ENCODE measurements at regions of chr16 and their contacts with region 1.

Region 1: GRCh38 chr16:660459-661183 is 7.3 kb upstream of the RHOT2 start:
- DNase-seq: peak; percentile 66 to 87
- ATAC-seq: peak; percentile 82 to 91
- H3K4me3 ChIP-seq: peak overlapping the region; percentile 11 to 48 (median 36)
- H3K27ac ChIP-seq: peak overlapping the region; percentile 62 to 77 (median 74)
- H3K4me1 ChIP-seq: peaks cover 0 to 10% of the 10 kb centered on the region in 2 donors
- H3K27me3 ChIP-seq: no peaks in the 10 kb centered on the region
- CTCF ChIP-seq: peak; percentile 21 to 78 (median 74)
- POLR2A ChIP-seq: peak in 1 of 2 donors; percentile 1

Region 2: DNA sequence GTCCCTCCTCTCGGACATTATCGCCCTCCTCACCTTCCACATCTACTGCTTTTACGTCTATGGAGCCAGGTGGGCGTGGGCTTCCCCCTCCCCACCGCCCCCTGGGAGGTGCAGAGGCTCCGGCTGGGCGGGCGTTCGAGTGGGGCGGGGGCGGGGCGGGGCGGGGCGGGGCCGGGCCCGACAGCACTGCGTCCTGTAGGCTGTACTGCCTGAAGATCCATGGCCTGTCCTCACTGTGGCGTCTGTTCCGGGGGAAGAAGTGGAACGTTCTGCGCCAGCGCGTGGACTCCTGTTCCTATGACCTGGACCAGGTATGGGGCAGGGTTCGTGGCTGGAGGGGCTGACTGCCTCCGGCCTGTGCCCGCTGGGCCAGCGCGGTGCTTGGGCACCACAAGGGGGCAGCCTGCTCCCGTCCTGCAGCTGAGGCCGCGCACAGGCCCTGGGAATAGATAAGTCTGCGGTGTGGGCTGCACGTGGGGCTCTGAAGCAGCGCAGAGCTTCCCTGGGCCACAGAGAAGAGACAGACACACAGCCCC is 81.7 kb before region 1 on chr16:
- in situ Hi-C with region 1: no loop called
- intact Hi-C with region 1: loop called (anchors 1 kb)
- DNase-seq: peak; percentile 38 to 72
- ATAC-seq: peak; percentile 84 to 86
- H3K4me3 ChIP-seq: no peak overlapping the region
- H3K27ac ChIP-seq: no peak overlapping the region
- H3K4me1 ChIP-seq: no peaks in the 10 kb centered on the region
- H3K27me3 ChIP-seq: no peaks in the 10 kb centered on the region
- CTCF ChIP-seq: peak; percentile 82 to 91 (median 86)
- POLR2A ChIP-seq: no peak

Region 3: GRCh38 chr16:589658-590159 is 70.9 kb before region 1 on chr16 and contains the start of gene RAB40C:
- in situ Hi-C with region 1: no loop called
- intact Hi-C with region 1: loop called (anchors 1 kb)
- DNase-seq: peak; percentile 99
- ATAC-seq: peak; percentile 60 to 72
- H3K4me3 ChIP-seq: peak within 1 kb of the TSS; percentile 89 to 94 (median 90)
- H3K27ac ChIP-seq: peak within 1 kb of the TSS; percentile 96 to 99 (median 98)
- H3K4me1 ChIP-seq: peaks cover 61 to 66% of the 10 kb centered on the region in 2 donors
- H3K27me3 ChIP-seq: no peaks in the 10 kb centered on the region
- CTCF ChIP-seq: no peak
- POLR2A ChIP-seq: no peak
- total RNA-seq, gene RAB40C: 15.6 to 29.3 (median 21.4) TPM

Region 4: GRCh38 chr16:636206-637080 is 24.2 kb before region 1 on chr16 and contains the start of gene METTL26:
- in situ Hi-C with region 1: no loop called
- intact Hi-C with region 1: loop called (anchors 1 kb)
- DNase-seq: peak; percentile 94 to 97
- ATAC-seq: peak; percentile 86 to 89
- H3K4me3 ChIP-seq: peak within 1 kb of the TSS; percentile 81 to 98 (median 96)
- H3K27ac ChIP-seq: peak within 1 kb of the TSS; percentile 94 to 100 (median 98)
- H3K4me1 ChIP-seq: peaks cover 11 to 24% of the 10 kb centered on the region in 2 donors
- H3K27me3 ChIP-seq: no peaks in the 10 kb centered on the region
- CTCF ChIP-seq: no peak
- POLR2A ChIP-seq: peak; percentile 66 to 68
- total RNA-seq, gene METTL26: 114 to 212 (median 141) TPM

Region 5: GRCh38 chr16:648781-649589 is 11.6 kb before region 1 on chr16 and contains the start of gene WDR90:
- in situ Hi-C with region 1: no loop called
- intact Hi-C with region 1: loop called (anchors 1 kb)
- DNase-seq: peak; percentile 84 to 88
- ATAC-seq: peak; percentile 85
- H3K4me3 ChIP-seq: peak within 1 kb of the TSS; percentile 61 to 78 (median 65)
- H3K27ac ChIP-seq: peak within 1 kb of the TSS; percentile 87 to 97 (median 96)
- H3K4me1 ChIP-seq: peaks cover 35 to 55% of the 10 kb centered on the region in 2 donors
- H3K27me3 ChIP-seq: no peaks in the 10 kb centered on the region
- CTCF ChIP-seq: no peak
- POLR2A ChIP-seq: peak; percentile 60 to 70
- total RNA-seq, gene WDR90: 2.9 to 9.8 (median 6.5) TPM

Region 6: GRCh38 chr16:684067-684794 is 23.6 kb after region 1 on chr16 and contains the start of gene JMJD8:
- in situ Hi-C with region 1: no loop called
- intact Hi-C with region 1: no loop called
- DNase-seq: peak; percentile 94
- ATAC-seq: peak; percentile 72 to 76
- H3K4me3 ChIP-seq: peak within 1 kb of the TSS; percentile 84 to 87 (median 86)
- H3K27ac ChIP-seq: peak within 1 kb of the TSS; percentile 73 to 87 (median 83)
- H3K4me1 ChIP-seq: peaks cover 35 to 57% of the 10 kb centered on the region in 2 donors
- H3K27me3 ChIP-seq: no peaks in the 10 kb centered on the region
- CTCF ChIP-seq: no peak
- POLR2A ChIP-seq: peak; percentile 53 to 60
- total RNA-seq, gene JMJD8: 22.8 to 81.8 (median 41.0) TPM